Left colon (tissue), 2 donors: ENCODE measurements at regions of chr6 and their contacts with region 1.

Region 1: GRCh38 chr6:129598244-129599187 is 111.5 kb downstream of the ARHGAP18 start:
- DNase-seq: no peak
- ATAC-seq: peak; percentile 79

Region 2: DNA sequence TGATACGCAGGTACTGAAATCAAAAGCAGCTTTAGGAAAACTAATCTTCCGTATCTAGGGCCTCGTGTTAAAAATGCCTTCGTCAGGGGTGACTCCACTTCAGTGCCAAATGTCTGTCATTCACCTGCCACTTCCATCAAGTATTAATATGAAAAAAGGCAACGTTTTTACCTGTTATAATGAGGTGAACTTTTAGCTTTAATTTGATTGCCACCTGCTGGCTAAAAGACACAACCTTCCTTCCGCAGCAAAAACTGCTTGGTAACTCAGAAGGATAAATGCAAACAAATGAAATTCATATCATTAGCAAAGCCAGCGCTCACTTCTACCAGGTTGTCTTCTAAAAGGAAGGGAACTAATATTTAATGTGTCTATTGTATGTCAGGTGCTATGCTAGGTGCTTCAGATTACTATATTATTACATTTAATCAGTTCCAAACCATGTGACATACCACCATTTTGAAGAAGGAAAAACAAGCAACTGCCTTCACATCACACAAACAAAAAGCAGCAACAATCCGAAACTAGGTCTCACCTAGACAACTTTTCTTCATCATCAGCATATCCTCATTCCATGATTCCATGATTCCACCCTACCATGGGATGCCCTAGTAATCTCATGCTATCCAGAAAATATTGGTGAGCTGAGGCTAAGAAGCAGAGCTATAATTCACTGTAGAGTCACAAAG is 132.1 kb after region 1 on chr6:
- intact Hi-C with region 1: loop called in 1 of 2 experiments (anchors 5 kb)
- DNase-seq: no peak
- ATAC-seq: peak; percentile 63

Region 3: GRCh38 chr6:129748212-129748900 is 149.8 kb after region 1 on chr6:
- intact Hi-C with region 1: loop called in 1 of 2 experiments (anchors 10 kb)
- DNase-seq: peak; percentile 20 to 52
- ATAC-seq: peak; percentile 51